ENCODE measurements at regions of chr11 and their contacts with region 1.

Region 1: DNA sequence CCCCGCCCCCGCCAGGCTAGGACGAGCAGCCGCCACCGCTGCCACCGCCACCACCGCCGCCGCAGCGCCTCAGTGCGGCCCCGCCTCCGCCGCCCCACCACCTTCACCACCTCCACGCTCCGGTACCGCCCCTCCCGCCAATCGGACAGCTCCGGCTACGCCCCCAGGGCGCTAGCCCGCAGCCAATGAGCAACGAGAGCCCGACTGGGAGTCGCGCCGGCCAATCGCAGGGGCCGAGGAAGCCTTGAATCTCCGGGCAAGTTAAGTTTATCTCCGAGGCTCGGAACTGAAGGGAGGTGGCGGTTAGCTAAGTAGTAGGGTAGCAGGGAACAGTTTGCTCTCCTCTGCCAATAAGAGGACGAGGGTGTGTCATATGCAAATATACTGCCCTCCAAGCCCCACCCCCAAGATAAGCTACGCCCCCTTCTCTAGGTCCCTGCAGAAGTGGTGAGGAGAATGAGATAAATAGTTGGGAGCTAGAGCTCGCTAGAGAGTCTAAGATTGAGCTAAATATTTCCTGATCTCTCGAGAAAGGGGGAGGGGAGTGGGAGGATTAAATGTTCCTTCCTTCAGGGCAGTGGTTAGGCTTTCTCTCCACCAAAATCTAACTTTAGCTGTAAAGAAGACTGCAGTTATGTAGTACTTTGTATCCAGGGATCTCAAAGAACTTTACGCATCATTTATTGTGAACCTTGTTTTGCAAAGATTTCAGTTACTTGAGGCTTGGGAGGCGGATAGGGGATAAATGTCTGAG is at the start of gene SESN3:
- DNase-seq: peak; percentile 100
- H3K4me3 ChIP-seq: peak within 1 kb of the TSS; percentile 73 to 93 (median 92)
- H3K27ac ChIP-seq: peak within 1 kb of the TSS; percentile 64
- H3K4me1 ChIP-seq: peaks cover 20% of the 10 kb centered on the region
- H3K27me3 ChIP-seq: no peaks in the 10 kb centered on the region
- CTCF ChIP-seq: peak in 1 of 2 donors; percentile 30
- total RNA-seq, gene SESN3: 36.5 to 184 TPM

Region 2: DNA sequence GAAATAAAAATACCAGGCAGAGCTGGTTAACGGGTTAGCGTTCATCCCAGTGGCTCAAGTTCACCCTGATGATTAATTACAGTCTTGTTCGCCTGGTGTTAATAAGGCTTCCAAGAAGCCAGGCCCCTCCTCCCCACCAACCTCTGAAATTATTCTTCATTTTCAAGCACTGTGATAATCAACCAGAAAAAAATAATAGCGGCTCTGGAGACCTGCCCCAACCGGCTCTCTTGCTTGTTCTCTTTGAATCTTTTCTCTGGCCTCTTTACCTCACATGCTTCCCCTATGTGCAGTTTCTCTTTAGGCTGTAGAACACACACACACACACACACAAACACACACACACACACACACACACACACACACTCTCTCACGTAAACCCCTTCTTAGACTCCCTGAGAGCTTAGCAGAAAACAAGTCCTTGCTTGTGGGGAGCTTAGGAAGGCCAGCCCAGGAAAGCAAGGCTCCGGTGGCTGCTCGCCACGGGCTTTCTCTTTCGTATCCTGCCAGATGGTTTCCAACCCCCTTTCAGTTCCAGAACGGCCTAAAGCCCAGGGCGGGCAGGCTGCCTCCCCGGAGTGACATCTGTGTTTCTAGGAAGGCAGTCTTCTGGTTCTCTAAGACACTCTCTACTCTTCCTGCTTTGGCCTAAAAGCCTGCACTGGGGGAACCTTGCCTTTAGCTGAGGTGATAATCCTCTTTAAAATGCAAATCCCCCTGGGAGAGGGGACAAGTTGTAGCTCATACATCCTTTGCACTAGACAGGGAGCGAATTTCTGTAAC is 106.1 kb after region 1 on chr11:
- CTCF ChIA-PET with region 1: no interaction called
- dilution Hi-C with region 1: no loop called
- in situ Hi-C with region 1: no loop called
- intact Hi-C with region 1: loop called (anchors 2 kb)
- DNase-seq: peak; percentile 90
- H3K4me3 ChIP-seq: peak overlapping the region in 1 of 3 experiments; percentile 2
- H3K27ac ChIP-seq: peak overlapping the region; percentile 46
- H3K4me1 ChIP-seq: peaks cover 25% of the 10 kb centered on the region
- H3K27me3 ChIP-seq: no peaks in the 10 kb centered on the region
- CTCF ChIP-seq: no peak

Region 3: DNA sequence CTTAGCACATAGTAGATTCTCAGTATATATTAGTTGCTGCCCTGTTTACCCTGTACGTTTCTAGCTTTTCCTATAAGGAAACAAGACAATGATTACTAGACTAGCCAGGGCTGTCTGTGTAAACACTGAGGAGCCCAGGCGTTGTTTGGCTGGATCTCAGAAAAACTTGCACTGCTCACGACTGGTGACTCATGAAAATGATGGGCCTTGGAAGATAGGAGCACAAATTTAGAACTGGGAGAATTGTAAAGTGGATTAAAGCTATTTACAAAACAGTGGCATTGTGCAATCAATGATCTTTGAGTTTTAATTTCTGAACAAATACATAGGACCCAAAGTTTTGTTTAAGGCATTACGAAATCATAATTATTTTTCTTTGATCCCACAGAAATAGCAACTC is 281.4 kb after region 1 on chr11:
- CTCF ChIA-PET with region 1: no interaction called
- dilution Hi-C with region 1: no loop called
- in situ Hi-C with region 1: loop called in 1 of 2 experiments (anchors 10 kb)
- intact Hi-C with region 1: no loop called
- DNase-seq: peak; percentile 80
- H3K4me3 ChIP-seq: no peak overlapping the region
- H3K27ac ChIP-seq: peak overlapping the region; percentile 91
- H3K4me1 ChIP-seq: peaks cover 59% of the 10 kb centered on the region
- H3K27me3 ChIP-seq: no peaks in the 10 kb centered on the region
- CTCF ChIP-seq: no peak

Region 4: DNA sequence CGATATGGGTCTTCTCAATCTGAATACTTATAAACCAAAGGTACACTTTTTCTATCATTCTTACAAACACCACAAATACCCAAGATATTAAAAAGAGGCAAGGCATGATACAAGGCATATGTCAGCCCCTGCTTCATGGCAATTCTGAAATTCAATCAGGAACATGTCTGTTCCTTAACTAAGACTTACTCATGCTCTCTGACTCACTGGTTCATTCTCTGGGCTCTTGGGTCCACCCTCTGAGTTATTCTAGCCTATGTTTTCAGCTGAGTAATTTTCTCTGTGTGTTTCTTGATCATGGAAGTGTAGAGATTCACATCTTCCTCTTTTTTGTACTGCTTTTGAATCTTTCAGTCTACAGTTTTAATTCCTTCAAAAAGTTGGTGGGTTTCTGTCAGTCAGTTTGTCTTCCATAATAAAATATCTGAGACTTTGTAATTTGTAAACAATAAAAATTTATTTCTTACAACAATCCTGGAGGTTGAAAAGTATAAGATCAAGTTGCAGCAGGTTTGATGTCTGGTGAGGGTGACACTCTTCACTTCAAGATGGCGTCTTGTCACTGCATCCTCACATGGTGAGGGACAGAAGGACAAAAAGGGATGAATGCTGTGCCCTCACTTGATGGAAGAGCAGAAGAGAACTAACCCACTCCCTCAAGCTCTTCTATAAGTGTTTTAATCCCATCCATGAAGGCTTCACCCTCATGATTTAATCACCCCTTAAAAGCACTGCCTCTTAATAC is 346.6 kb after region 1 on chr11:
- CTCF ChIA-PET with region 1: no interaction called
- dilution Hi-C with region 1: no loop called
- in situ Hi-C with region 1: no loop called
- intact Hi-C with region 1: loop called (anchors 5 kb)
- DNase-seq: peak; percentile 89
- H3K4me3 ChIP-seq: no peak overlapping the region
- H3K27ac ChIP-seq: peak overlapping the region; percentile 57
- H3K4me1 ChIP-seq: peaks cover 22% of the 10 kb centered on the region
- H3K27me3 ChIP-seq: no peaks in the 10 kb centered on the region
- CTCF ChIP-seq: peak in 1 of 2 donors; percentile 26

Region 5: DNA sequence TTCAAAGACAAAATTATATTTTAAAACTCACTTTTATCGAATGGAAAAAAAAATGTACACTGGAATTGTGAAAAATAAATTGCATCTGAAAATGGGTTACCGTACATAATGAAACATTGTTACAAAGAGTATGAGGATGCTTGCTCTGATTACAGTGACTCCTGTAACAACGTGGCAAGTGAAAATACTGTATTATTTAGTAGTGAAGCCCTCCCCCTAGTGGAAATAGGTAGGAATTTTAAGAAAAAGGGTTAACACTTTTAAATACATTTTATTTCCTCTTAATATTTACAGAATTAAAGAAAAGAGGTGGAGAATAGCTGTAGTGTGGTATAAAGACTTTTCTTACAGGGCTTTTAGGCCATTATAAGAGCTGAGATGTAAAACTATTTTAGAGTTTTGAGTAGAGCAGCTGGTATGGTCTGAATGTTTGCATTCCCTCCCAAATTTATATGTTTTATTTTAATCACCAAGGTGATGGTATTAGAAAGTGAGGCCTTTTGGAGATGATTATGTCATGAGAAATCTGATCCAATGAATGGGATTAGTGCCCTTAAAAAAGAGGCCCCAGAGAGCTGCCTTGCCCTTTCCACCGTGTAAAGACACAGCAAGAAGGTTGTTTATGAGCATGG is 533.1 kb after region 1 on chr11:
- CTCF ChIA-PET with region 1: no interaction called
- dilution Hi-C with region 1: no loop called
- in situ Hi-C with region 1: no loop called
- intact Hi-C with region 1: loop called (anchors 2 kb)
- DNase-seq: peak; percentile 37
- H3K4me3 ChIP-seq: no peak overlapping the region
- H3K27ac ChIP-seq: no peak overlapping the region
- H3K4me1 ChIP-seq: peaks cover 8% of the 10 kb centered on the region
- H3K27me3 ChIP-seq: no peaks in the 10 kb centered on the region
- CTCF ChIP-seq: peak; percentile 45 to 61

Measured in mammary epithelial cell (primary cell).